ENCODE measurements at regions of chrX and their contacts with region 1.

Region 1: DNA sequence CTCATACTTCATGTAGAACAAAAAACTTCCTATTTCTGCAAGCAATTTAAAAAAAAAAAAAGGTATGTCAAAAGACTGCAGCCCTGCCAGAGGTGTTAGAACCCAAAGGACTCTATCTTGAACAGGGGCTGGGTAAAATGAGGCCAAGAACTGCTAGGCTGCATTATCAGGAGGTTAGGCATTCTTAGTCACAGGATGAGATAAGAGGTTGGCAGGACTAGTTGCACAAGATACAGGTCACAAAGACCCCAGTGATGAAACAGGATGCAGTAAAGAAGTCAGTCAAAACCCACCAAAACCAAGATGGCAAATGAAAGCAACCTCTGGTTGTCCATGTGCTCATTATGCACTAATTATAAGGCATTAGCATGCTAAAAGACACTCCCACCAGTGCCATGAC is 104.1 kb downstream of the ANOS1 start:
- DNase-seq: no peak
- H3K4me3 ChIP-seq: no peak overlapping the region
- H3K27ac ChIP-seq: no peak overlapping the region
- H3K4me1 ChIP-seq: peaks cover 14% of the 10 kb centered on the region
- H3K27me3 ChIP-seq: no peaks in the 10 kb centered on the region
- CTCF ChIP-seq: no peak

Region 2: GRCh38 chrX:8749697-8750096 is 121.9 kb after region 1 on chrX:
- CTCF ChIA-PET with region 1: no interaction called
- POLR2A ChIA-PET with region 1: interaction called, 22 read pairs
- intact Hi-C with region 1: no loop called
- DNase-seq: no peak
- H3K4me3 ChIP-seq: no peak overlapping the region
- H3K27ac ChIP-seq: no peak overlapping the region
- H3K4me1 ChIP-seq: no peaks in the 10 kb centered on the region
- H3K27me3 ChIP-seq: no peaks in the 10 kb centered on the region
- CTCF ChIP-seq: no peak

Measured in PC-9 (cell line).